ENCODE measurements at regions of chrX and their contacts with region 1.

Region 1: DNA sequence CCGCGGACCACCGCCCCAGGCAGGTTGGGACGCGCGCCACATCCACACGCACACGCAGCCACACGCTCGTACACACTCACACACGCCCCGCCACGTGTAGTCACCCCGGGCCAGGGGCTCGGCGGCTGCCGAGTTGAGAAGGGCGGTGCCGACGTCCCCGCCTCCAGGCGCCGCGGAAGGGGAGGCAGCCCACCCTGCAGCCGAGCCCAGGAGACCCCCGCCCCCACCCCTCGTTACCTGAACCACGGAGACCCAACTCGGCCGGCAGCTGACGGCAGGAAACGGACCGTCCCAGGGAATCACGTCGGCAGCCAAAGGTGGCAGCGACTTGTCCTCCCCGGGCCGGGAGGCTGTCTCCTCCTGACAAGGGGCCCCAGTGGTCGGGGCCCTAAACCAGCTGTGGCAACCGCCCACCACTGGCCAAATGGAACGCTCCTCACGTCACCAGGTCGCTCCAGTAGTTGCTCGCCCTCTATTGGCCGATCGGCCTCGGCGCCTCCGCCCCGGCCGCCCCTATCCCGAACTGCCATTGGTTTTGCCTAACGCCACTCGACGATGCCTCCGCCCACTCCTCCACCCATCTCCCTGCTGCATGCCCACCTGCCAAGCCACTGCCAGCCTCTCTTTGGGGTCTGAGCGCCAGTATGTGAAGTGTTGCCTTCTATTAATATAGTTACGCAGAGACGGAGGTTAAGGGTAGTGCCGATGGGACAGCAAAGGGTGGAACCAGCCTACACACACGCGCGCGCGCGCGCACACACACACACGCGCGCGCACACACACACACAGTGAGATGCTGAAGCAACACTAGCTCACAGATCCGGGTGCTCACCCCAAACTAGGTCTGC is at the start of gene ZDHHC9:
- DNase-seq: peak; percentile 89
- H3K4me3 Mint-ChIP-seq: peak within 1 kb of the TSS; percentile 88
- H3K27ac Mint-ChIP-seq: peak within 1 kb of the TSS; percentile 70
- H3K4me1 Mint-ChIP-seq: peaks cover 38% of the 10 kb centered on the region
- H3K27me3 Mint-ChIP-seq: no peaks in the 10 kb centered on the region
- total RNA-seq, gene ZDHHC9: 7.1 TPM

Region 2: DNA sequence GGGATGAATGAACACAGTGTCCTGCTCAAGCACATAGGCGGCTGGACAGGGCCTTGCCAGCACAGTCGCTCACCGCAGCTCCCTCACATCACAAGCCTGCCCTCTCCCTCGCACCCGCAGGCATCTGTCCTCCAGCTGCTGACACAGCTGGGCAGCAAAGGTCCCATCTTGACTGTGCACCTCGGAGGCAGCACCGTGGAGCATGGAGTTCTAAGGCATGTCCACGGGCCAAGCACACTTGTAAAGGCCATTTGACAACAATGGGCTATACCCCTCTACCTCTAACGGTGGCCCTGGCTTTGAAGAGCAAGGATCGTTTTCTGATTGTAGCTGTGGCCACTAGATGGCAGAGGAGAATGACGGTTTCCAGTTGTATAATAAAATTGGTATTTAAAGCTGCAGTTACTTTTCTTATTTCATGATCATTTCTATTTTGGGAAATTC is 242.7 kb before region 1 on chrX:
- CTCF ChIA-PET with region 1: no interaction called
- intact Hi-C with region 1: loop called (anchors 5 kb)
- DNase-seq: peak; percentile 36
- H3K4me3 Mint-ChIP-seq: no peak overlapping the region
- H3K27ac Mint-ChIP-seq: no peak overlapping the region
- H3K4me1 Mint-ChIP-seq: peaks cover 18% of the 10 kb centered on the region
- H3K27me3 Mint-ChIP-seq: no peaks in the 10 kb centered on the region

Region 3: GRCh38 chrX:129759576-129760061 is 84.1 kb before region 1 on chrX:
- CTCF ChIA-PET with region 1: no interaction called
- intact Hi-C with region 1: loop called (anchors 5 kb)
- DNase-seq: peak; percentile 81
- H3K4me3 Mint-ChIP-seq: peak overlapping the region; percentile 32
- H3K27ac Mint-ChIP-seq: peak overlapping the region; percentile 68
- H3K4me1 Mint-ChIP-seq: peaks cover 51% of the 10 kb centered on the region
- H3K27me3 Mint-ChIP-seq: no peaks in the 10 kb centered on the region

Region 4: DNA sequence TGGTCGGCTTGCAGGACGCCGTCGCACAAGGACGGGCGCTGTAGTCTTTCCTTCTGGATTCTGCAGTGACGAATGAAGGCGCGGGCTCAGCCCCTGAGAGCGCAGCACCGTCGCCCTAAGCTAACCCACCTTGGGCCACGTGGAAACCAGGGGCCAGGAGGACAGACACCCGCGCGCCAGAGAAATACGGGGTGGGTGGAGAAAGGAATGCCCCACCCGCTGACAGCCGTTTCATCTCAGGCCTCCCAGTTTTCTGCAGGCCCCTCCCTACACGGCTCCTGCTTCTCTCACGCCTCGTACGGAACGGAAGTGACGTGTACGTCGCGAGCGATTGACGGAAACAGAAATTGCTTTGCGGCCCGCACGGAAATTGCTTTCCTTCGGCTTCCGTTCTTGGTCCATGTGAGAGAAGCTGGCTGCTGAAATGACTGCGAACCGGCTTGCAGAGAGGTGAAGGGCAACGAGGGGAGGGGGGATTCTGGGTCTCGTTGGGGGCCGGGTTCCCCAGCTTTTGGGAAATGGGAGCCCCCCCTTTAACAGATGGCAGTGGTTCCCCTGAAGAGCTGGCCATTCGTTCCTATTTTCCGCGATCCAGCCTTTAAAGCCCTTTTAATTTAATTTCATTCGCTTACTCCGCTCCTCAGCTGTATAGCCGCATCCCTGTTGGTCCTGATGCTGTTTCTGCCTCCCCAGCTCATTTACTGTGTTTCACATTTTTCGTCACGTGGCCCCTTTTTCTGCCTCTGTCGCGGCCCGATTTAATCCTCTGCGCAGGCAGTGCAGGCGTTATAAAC is 62.3 kb after region 1 on chrX and contains the start of gene UTP14A:
- CTCF ChIA-PET with region 1: no interaction called
- intact Hi-C with region 1: loop called (anchors 1 kb)
- DNase-seq: peak; percentile 92
- H3K4me3 Mint-ChIP-seq: peak within 1 kb of the TSS; percentile 84
- H3K27ac Mint-ChIP-seq: peak within 1 kb of the TSS; percentile 82
- H3K4me1 Mint-ChIP-seq: peaks cover 31% of the 10 kb centered on the region
- H3K27me3 Mint-ChIP-seq: no peaks in the 10 kb centered on the region
- total RNA-seq, gene UTP14A: 21.5 to 22.6 TPM